Dendritic cell treated with granulocyte-macrophage colony-stimulating factor and Interleukin-4, amounts not matched to agents 40 ng/mL and 50 ng/mL, for 4 days (primary cell): ENCODE measurements at regions of chrX and their contacts with region 1.

Region 1: DNA sequence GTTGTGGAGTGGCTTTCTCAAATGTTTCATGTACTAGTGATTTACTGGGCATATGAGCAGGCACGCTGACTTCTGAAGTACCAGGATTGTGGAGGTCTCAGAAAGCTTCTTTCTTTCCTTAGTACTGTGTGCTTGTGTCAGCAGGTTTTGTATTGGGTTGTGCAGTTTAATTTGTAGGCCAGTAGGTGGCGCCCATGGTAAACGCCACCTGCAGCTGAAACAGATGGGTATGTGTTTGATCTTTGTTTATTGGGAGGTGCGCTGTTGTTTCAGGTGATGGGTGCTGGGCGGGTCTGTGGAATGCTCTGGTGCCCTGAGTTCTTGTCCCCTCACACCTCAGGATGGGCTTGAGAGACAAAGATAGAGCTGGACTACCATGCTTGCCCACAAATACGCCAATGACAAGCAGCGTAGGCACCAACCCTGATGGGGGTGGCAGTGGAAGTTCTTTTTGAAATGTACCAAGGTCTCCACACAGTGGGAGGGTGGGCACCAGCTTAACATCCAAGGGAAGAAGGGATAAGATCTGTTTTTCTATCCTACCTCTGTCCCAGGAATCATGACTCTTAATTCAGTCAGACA is 141.5 kb downstream of the RPS6KA6 start:
- H3K4me3 Mint-ChIP-seq: no peak overlapping the region
- H3K27ac Mint-ChIP-seq: no peak overlapping the region
- H3K4me1 Mint-ChIP-seq: peaks cover 5% of the 10 kb centered on the region
- H3K27me3 Mint-ChIP-seq: peaks cover 1% of the 10 kb centered on the region

Region 2: DNA sequence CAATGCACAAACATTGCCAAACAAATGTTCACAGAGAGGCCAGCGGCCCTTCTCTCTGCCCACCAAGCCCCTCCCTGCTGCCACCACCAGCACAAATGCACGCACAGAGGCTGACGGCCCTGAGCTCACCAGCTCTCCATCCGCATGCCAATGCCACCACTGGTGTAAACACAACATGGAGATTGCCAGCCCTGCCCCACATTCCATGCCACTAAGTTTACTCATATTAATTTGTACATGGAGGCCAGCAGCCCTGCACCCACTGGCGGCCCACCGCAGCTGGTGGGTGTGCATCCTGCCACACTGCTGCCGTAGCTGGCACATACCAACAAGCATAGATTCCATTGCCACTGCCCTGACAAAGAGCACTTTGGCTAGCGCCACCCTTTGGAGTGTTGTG is 61.5 kb before region 1 on chrX:
- intact Hi-C with region 1: no loop called
- H3K4me3 Mint-ChIP-seq: no peak overlapping the region
- H3K27ac Mint-ChIP-seq: no peak overlapping the region
- H3K4me1 Mint-ChIP-seq: no peaks in the 10 kb centered on the region
- H3K27me3 Mint-ChIP-seq: no peaks in the 10 kb centered on the region

Region 3: DNA sequence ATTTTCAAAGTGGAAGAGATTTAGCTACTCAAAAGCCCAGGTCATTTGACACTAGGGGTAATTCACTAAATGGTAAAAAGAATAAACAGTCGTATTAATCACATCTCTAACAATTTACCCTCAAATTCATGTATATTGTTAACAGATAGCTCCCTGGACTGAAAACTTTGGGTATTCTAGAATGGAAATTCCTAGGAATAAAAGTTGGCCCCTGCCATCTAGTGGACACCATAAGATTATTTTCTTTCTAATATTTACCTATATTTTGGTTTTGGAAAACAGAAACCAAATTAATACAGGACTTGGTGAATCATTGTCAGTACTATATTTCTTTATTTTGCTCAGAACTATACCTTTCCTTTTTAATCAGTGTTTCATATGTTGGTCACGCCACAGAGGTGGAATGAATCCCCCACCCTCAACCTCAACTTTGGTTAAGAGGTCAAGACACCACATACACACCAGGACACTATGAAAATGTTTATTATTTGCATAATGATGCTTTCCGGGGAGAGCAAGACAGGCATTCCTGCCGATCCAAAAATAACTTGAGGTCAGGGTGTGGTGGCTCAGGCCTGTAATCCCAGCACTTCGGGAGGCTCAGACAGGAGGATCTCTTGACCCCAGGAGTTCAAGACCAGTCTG is 861.0 kb after region 1 on chrX:
- intact Hi-C with region 1: loop called (anchors 5 kb)
- H3K4me3 Mint-ChIP-seq: no peak overlapping the region
- H3K27ac Mint-ChIP-seq: no peak overlapping the region
- H3K4me1 Mint-ChIP-seq: no peaks in the 10 kb centered on the region
- H3K27me3 Mint-ChIP-seq: no peaks in the 10 kb centered on the region

Region 4: DNA sequence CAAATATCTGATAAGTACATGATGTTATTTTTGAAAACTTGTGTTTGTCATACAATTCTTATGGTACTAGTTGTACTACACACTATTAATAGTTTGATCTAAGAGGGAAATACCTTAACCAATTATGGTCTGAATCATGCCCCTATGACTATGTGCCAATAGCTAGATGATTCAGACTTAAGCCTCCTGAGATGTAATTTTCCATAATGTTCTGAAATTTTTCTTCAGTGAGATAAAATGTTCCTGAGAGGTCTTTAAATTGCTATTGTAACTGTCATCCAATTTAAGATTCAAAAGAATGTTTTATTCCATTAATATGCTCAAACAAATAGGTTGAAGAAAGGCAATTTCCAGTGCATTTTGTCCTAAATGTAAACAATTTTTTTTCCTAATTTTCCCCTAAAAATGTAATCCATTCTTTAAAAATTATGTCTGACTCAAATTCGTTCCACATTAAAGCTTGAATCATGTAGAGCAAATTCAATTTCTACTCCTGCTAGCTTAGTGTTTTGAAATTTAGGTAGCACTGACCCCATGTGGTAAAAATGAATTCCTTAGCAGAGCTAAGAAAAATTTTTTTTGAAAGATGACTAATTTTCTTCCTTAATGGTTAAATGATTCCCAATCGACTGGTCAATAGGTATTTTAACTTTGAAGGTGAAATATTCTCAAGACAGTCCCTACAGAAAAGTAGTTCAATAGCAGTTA is 1006.3 kb after region 1 on chrX:
- intact Hi-C with region 1: loop called (anchors 10 kb)
- H3K4me3 Mint-ChIP-seq: no peak overlapping the region
- H3K27ac Mint-ChIP-seq: no peak overlapping the region
- H3K4me1 Mint-ChIP-seq: no peaks in the 10 kb centered on the region
- H3K27me3 Mint-ChIP-seq: no peaks in the 10 kb centered on the region